ENCODE measurements at regions of chr10 and their contacts with region 1.

Region 1: DNA sequence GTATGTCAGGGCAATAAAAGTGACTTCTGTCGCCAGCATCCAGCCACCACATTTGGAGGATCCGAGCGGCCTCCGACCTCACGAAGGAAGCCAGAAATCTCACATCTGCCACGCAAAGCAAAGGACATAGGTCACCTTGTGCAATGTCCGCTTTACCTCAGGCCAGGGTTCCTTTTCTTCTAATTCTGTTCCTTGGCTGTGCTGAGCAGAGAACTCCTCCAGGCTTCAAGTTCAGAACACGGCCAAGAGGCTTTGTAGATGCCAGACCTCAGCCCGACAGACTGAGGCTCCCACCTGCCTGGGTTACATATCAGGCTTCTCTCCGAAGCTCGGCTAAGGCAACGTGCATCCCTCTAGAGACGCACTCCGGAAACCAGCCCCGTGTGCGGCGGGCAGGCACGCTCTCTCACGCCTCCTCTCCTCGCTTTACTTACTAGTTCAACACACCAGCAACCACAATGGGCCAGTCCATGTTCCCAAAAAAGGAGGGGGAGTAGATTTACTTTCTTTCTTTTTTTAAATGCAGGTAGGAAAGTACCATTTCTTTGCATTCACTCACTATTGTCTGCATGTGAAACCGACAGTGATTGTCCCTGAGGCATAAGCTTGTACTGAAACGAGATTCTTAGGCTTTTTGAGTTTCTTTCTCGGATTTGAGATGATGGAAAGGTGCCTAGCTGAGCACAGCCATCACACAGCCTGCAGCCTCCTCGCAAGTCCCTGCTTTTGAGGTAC is 122.4 kb upstream of the AFAP1L2 start:
- DNase-seq: peak; percentile 84
- ATAC-seq: peak; percentile 93
- H3K4me3 Mint-ChIP-seq: peak overlapping the region; percentile 95
- H3K27ac Mint-ChIP-seq: peak overlapping the region; percentile 96
- H3K4me1 Mint-ChIP-seq: peaks cover 56% of the 10 kb centered on the region
- H3K27me3 Mint-ChIP-seq: no peaks in the 10 kb centered on the region

Region 2: DNA sequence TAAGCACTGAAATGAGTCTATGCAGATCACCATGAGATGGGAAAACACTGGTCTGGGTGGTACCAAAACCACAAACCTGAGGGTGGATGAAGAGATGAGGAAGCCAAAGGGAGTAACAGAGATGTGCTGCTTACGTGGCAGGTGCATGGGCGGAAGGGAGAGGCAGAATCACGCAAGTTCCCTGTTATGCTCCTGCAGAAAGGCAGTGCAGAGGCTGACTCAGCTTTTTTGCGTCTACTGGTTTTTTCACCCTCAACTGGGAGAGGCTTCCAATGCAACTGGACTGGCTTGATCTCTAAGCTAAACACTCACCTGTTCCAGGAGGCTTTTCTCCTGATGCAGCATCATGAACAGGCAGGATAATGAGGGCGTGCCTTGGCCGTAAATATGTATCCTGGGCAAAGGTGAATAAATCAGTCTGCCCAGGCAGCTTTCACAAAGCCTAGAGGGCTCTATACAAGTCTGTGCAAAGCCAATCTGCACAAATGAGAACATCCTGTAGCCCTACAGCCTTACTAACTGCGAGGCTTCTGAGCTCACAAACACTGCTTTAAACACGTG is 27.0 kb before region 1 on chr10:
- POLR2A ChIA-PET with region 1: interaction called, 30 read pairs
- DNase-seq: no peak
- ATAC-seq: peak; percentile 67
- H3K4me3 Mint-ChIP-seq: peak overlapping the region; percentile 72
- H3K27ac Mint-ChIP-seq: peak overlapping the region; percentile 90
- H3K4me1 Mint-ChIP-seq: peaks cover 75% of the 10 kb centered on the region
- H3K27me3 Mint-ChIP-seq: no peaks in the 10 kb centered on the region

Region 3: GRCh38 chr10:114541081-114541796 is 14.6 kb after region 1 on chr10:
- POLR2A ChIA-PET with region 1: interaction called, 387 read pairs
- DNase-seq: peak; percentile 63
- ATAC-seq: peak; percentile 78
- H3K4me3 Mint-ChIP-seq: peak overlapping the region; percentile 80
- H3K27ac Mint-ChIP-seq: peak overlapping the region; percentile 100
- H3K4me1 Mint-ChIP-seq: peaks cover 78% of the 10 kb centered on the region
- H3K27me3 Mint-ChIP-seq: no peaks in the 10 kb centered on the region

Region 4: GRCh38 chr10:114674346-114674745 is 147.7 kb after region 1 on chr10:
- POLR2A ChIA-PET with region 1: no interaction called
- DNase-seq: no peak
- ATAC-seq: no peak
- H3K4me3 Mint-ChIP-seq: no peak overlapping the region
- H3K27ac Mint-ChIP-seq: no peak overlapping the region
- H3K4me1 Mint-ChIP-seq: no peaks in the 10 kb centered on the region
- H3K27me3 Mint-ChIP-seq: peaks cover 11% of the 10 kb centered on the region

Region 5: GRCh38 chr10:114821293-114821914 is 294.7 kb after region 1 on chr10 and contains the start of gene FHIP2A:
- POLR2A ChIA-PET with region 1: interaction called, 11 read pairs
- DNase-seq: peak; percentile 97
- ATAC-seq: peak; percentile 93
- H3K4me3 Mint-ChIP-seq: peak within 1 kb of the TSS; percentile 92
- H3K27ac Mint-ChIP-seq: peak within 1 kb of the TSS; percentile 92
- H3K4me1 Mint-ChIP-seq: peaks cover 15% of the 10 kb centered on the region
- H3K27me3 Mint-ChIP-seq: peaks cover 22% of the 10 kb centered on the region
- total RNA-seq, gene FHIP2A: 26.4 to 29.7 TPM